Colonic mucosa (tissue), 4 donors: ENCODE measurements at regions of chr17 and their contacts with region 1.

Region 1: GRCh38 chr17:46121841-46122485 is 71.3 kb downstream of the KANSL1 start:
- DNase-seq: no peak
- H3K4me3 ChIP-seq: no peak overlapping the region
- H3K27ac ChIP-seq: no peak overlapping the region
- H3K4me1 ChIP-seq: peaks cover 3% of the 10 kb centered on the region
- H3K27me3 ChIP-seq: no peaks in the 10 kb centered on the region
- CTCF ChIP-seq: no peak

Region 2: GRCh38 chr17:46182961-46183360 is 61.0 kb after region 1 on chr17:
- intact Hi-C with region 1: loop called (anchors 10 kb)
- DNase-seq: no peak
- H3K4me3 ChIP-seq: no peak overlapping the region
- H3K27ac ChIP-seq: no peak overlapping the region
- H3K4me1 ChIP-seq: peaks cover 13% of the 10 kb centered on the region
- H3K27me3 ChIP-seq: no peaks in the 10 kb centered on the region
- CTCF ChIP-seq: no peak